ENCODE measurements at regions of chr5 and their contacts with region 1.

Region 1: DNA sequence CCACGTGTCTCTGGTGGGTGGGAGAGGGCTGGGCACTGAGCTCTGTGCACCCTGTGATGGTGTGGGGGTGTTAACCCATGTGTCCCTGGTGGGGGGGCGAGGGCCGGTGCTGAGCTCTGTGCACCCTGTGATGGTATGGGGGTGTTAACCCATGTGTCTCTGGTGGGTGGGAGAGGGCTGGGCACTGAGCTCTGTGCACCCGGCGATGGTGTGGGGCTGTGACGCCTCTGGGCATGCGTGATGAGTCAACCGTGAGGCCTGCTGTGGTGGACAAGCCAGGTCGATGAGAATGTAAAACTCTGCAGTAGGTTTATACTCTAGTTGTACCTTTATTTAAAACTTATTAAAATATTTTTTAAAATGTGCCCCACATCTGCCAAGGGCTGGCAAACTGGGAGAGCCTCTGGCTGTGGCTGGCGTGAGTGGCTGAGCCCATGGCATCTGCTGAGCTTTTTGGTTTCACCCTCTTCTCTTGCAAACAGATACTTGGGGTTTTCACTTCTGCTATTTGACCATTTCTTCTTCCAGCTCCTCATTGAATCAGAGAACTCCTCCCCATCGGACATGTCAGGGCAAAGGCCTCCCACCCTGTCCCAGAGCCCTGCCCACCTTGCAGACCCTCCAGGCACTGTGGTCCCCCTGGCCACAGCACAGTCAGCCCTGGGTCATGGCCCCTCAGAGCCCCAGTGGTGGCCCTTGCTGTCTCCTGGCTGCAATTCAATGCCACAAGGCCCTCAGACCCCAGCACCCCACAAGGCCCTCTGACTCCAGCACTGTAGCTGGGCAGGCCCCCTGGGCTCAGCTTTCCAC is 18.5 kb upstream of the EXOC3 start:
- DNase-seq: no peak
- H3K4me3 Mint-ChIP-seq: no peak overlapping the region
- H3K27ac Mint-ChIP-seq: peak overlapping the region; percentile 35
- H3K4me1 Mint-ChIP-seq: peaks cover 23% of the 10 kb centered on the region
- H3K27me3 Mint-ChIP-seq: no peaks in the 10 kb centered on the region

Region 2: DNA sequence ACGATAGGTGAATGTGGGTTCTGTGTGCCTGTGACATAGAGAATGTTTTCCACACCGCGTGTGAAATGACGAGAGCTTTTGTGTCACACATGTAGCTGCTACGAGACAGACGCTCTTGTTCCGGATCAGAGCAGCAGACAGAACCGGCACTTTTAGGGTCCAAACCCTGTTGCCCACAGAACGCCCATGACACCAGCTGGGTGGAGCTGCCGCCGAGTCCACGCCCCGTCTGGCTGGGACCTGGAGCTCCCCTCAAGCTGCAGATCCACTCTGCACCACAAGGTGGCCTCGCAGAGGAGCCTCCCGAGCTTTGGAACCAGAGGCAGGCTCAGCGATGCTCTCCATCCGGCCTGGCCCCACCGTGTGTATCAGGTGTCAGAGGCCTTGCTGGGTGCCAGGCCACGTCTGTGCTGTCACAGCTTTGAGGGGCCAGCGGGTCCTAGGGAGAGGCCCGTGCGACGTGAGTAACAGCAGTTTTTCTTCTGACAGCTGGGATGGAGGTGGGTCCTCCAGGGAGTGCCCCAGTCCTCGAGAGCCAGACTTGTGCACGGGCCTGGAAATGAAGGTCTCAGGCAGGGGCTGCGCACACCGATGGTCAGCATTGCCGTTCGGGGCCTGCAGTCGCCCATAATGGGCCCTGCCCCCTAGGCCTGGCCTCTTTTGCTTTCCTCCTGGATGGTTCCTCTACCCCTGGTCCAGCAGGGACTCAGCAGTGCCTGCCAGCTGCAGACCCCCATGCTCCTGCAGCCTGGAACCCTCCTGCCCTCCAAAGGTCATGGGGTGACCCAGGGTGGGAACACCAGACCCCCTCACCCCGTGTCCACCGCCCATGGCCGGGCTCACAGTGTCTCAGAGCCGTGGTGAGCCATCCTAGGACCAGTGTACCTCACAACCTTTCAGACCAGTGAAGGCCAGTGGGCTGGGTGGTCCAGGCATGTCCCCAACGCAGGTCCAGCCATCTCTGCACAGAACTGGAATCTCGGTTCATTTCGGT is 235.7 kb before region 1 on chr5:
- CTCF ChIA-PET with region 1: interaction called, 22 read pairs
- POLR2A ChIA-PET with region 1: no interaction called
- DNase-seq: peak; percentile 90
- H3K4me3 Mint-ChIP-seq: no peak overlapping the region
- H3K27ac Mint-ChIP-seq: no peak overlapping the region
- H3K4me1 Mint-ChIP-seq: peaks cover 9% of the 10 kb centered on the region
- H3K27me3 Mint-ChIP-seq: no peaks in the 10 kb centered on the region

Region 3: DNA sequence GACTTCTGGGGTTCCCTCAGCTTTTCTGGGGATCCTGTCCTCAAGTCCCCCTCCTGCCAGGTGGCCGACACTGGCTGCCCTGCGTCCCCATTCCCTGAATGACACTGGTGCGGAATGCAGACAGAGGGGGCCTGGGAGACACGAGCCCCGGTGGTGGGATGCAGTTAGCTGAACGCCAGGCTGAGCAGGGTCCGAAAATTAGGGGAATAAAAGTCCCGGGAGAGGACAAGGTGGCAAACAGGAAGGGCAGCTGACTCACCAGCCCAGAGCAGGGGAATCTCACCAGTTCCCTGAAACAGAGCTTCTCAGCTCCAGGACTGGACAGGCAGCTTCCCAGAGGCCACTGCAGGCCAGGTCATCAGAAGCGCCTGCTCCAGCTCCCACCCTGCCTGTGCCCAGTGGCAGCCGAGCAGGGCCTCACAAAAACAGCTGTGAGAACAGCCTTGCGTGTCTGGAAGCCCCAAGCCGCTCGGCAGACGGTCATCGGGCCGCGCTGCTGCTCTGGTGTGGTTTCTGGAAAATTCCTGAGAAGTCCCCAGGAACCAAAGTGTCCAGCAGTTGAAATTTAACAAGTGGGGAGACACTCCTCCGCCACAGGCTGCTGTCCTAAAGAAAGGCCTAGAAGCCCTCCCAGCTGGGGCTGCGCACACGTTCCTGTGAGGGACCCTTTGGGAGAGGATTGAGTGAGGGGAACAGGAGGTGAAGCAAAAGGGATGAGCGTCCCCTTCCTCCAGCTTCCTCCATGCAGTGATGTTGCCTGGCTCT is 29.2 kb before region 1 on chr5:
- CTCF ChIA-PET with region 1: no interaction called
- POLR2A ChIA-PET with region 1: no interaction called
- DNase-seq: peak; percentile 16
- H3K4me3 Mint-ChIP-seq: no peak overlapping the region
- H3K27ac Mint-ChIP-seq: peak overlapping the region; percentile 5
- H3K4me1 Mint-ChIP-seq: peaks cover 44% of the 10 kb centered on the region
- H3K27me3 Mint-ChIP-seq: peaks cover 2% of the 10 kb centered on the region

Measured in activated CD4-positive, alpha-beta memory T cell treated with anti-CD3 and anti-CD28 coated beads, Interleukin-2, amount 10 ng/mL, durations not matched to agents 7 days and 5 days (primary cell).